ENCODE measurements at regions of chr3 and their contacts with region 1.

Region 1: DNA sequence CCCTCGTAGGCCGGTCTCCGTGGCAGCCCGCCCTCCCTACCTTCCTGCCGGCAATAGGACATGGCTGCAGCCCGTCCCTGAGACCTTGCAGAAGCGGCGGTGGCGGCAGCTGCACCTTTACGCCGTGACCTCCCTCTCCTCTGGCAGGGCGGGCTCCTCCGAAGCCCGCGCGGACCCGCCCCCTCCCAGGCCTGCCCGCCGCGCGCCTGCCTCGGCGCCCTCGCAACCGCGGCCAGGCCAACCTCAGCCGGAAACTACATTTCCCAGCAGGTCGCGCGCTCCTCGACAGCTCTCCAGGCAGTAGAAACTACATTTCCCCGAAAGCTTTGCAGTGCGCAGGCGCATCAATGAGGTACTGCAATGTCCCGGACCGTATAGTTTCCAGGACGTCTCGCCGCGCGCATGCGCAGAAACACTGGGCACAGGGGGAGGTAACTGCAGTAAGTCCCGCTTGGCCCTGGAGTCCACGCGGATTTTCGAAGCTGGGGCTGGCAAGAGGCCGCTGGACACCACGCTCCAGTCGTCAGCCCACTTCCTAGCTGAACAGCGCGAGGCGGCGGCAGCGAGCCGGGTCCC is at the starts of genes CHCHD4 and TMEM43:
- DNase-seq: peak; percentile 98
- H3K4me3 ChIP-seq: peak within 1 kb of the TSS; percentile 79 to 98 (median 79)
- H3K27ac ChIP-seq: peak within 1 kb of the TSS; percentile 91
- H3K4me1 ChIP-seq: peaks cover 27% of the 10 kb centered on the region
- H3K27me3 ChIP-seq: no peaks in the 10 kb centered on the region
- CTCF ChIP-seq: no peak
- total RNA-seq, gene CHCHD4: 7.2 to 22.9 TPM
- total RNA-seq, gene TMEM43: 85.2 to 143 TPM

Region 2: DNA sequence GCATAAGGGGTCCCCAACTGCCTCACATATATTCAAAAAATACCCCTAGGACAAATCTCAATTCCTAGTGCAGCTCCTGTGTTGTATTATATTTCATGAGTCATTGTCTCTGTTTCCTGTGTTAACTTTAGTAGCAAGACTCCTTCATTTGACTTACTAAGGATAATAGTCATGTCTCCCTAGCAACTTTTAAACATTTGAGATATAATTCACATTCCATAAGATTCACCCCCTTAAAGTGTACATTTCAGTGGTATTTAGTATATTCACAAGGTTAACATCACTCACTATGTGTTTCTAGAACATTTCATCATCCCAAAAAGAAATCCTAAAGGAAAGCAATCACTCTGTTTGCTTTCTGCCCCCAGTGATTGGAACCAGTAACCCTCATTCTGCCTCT is 123.6 kb before region 1 on chr3:
- CTCF ChIA-PET with region 1: no interaction called
- dilution Hi-C with region 1: no loop called
- in situ Hi-C with region 1: no loop called
- intact Hi-C with region 1: loop called (anchors 2 kb)
- DNase-seq: peak; percentile 69
- H3K4me3 ChIP-seq: no peak overlapping the region
- H3K27ac ChIP-seq: peak overlapping the region; percentile 96
- H3K4me1 ChIP-seq: peaks cover 10% of the 10 kb centered on the region
- H3K27me3 ChIP-seq: no peaks in the 10 kb centered on the region
- CTCF ChIP-seq: no peak

Region 3: GRCh38 chr3:14077310-14077709 is 47.4 kb before region 1 on chr3:
- CTCF ChIA-PET with region 1: no interaction called
- dilution Hi-C with region 1: no loop called
- in situ Hi-C with region 1: no loop called
- intact Hi-C with region 1: no loop called
- DNase-seq: peak; percentile 50
- H3K4me3 ChIP-seq: no peak overlapping the region
- H3K27ac ChIP-seq: no peak overlapping the region
- H3K4me1 ChIP-seq: no peaks in the 10 kb centered on the region
- H3K27me3 ChIP-seq: no peaks in the 10 kb centered on the region
- CTCF ChIP-seq: no peak

Region 4: DNA sequence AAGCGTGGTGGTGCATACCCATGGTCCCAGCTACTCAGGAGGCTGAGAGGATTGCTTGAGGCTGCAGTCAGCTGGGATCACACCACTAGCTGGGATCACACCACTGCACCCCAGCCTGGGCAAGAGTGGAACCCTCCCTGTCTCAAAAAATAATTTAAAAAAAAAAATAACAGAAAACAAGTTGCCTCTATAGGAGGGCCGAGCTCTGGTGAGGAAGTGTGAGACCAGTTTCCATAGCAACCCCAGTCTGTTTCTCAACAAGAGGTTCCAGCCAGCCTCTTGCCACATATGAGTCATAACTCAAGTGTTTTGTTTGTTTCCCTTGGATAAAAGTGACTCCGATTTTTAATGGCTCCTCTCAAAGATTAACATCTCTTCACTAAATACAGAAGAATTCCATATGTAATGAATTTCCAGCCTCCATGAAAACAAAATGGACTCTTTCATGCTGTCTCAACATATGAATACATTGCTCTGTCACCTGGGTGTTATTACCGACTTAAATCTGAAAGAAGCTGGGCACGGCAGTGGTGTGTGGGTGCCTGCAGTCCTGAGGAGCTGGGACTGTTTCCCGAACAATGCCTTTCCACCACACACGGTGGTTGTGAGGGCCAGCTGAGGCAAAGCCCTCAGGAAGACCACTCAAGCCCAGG is 19.8 kb after region 1 on chr3:
- CTCF ChIA-PET with region 1: no interaction called
- dilution Hi-C with region 1: no loop called
- in situ Hi-C with region 1: no loop called
- intact Hi-C with region 1: loop called (anchors 1 kb)
- DNase-seq: peak; percentile 94
- H3K4me3 ChIP-seq: peak overlapping the region in 1 of 3 experiments; percentile 18
- H3K27ac ChIP-seq: peak overlapping the region; percentile 99
- H3K4me1 ChIP-seq: peaks cover 40% of the 10 kb centered on the region
- H3K27me3 ChIP-seq: no peaks in the 10 kb centered on the region
- CTCF ChIP-seq: no peak

Region 5: DNA sequence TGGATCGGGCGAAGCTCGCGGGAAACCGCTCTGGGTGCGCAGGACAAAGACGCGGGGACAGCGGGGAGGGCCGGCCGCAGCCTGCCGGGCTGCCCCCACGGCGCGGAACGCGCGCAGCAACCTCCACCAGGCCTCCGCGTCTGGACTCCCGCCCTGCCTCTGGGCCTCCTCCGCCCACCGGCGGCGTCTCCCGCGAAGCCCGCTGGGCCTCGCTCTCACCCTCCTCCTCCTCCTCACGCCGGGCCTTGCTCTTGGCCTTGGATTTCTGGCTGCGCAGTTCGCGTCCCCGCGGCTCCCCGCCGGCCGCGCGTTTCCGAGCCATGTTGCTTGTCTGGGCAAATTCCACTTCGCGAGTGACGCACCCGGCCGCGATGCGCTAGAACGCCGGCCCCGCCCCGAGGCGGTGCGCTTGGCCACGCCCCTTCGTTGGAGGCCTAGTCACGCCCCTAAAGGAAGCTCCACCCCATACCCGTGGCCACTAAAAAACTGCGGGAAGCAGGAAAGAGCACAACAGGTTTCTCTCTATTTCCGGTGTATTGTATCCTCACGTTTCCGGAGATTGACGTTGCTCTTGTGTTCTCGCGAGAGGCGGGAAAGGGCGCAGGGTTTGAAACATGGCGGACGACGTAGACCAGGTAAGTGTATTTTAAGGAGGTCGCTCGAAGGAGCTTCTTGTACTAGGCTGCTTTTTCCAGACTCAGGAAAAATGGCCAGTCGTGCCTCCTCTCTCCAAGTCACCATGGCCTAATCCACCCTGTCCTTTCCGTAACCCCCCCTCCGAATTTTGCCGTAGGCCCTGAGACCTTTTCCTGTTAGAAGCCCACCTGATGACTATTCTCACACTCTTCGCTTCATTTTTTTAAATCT is 53.8 kb after region 1 on chr3 and contains the starts of genes LSM3 and XPC:
- CTCF ChIA-PET with region 1: no interaction called
- dilution Hi-C with region 1: no loop called
- in situ Hi-C with region 1: no loop called
- intact Hi-C with region 1: loop called (anchors 2 kb)
- DNase-seq: peak; percentile 98
- H3K4me3 ChIP-seq: peak within 1 kb of the TSS; percentile 92 to 94 (median 93)
- H3K27ac ChIP-seq: peak within 1 kb of the TSS; percentile 94
- H3K4me1 ChIP-seq: peaks cover 36% of the 10 kb centered on the region
- H3K27me3 ChIP-seq: no peaks in the 10 kb centered on the region
- CTCF ChIP-seq: no peak
- total RNA-seq, gene LSM3: 5.0 to 11.7 TPM
- total RNA-seq, gene XPC: 42.5 to 68.2 TPM

Region 6: GRCh38 chr3:14467814-14468620 is 343.3 kb after region 1 on chr3:
- CTCF ChIA-PET with region 1: no interaction called
- dilution Hi-C with region 1: no loop called
- in situ Hi-C with region 1: no loop called
- intact Hi-C with region 1: loop called (anchors 5 kb)
- DNase-seq: no peak
- H3K4me3 ChIP-seq: no peak overlapping the region
- H3K27ac ChIP-seq: no peak overlapping the region
- H3K4me1 ChIP-seq: peaks cover 9% of the 10 kb centered on the region
- H3K27me3 ChIP-seq: no peaks in the 10 kb centered on the region
- CTCF ChIP-seq: peak; percentile 63 to 78

Measured in mammary epithelial cell (primary cell).